GM12878 (cell line): ENCODE measurements at regions of chr2 and their contacts with region 1.

Region 1: GRCh38 chr2:224520064-224520463 is 65.1 kb downstream of the CUL3 start:
- DNase-seq: peak; percentile 86
- ATAC-seq: peak; percentile 78
- H3K4me3 ChIP-seq: no peak overlapping the region; the same call in 1 of the 2 replicates
- H3K27ac ChIP-seq: peak overlapping the region; percentile 88
- H3K4me1 ChIP-seq: peaks cover 52% of the 10 kb centered on the region
- H3K27me3 ChIP-seq: no peaks in the 10 kb centered on the region
- CTCF ChIP-seq: no peak
- EP300 ChIP-seq: peak; percentile 74 to 84; a peak in 3 of 4 replicates
- POLR2A ChIP-seq: no peak
- RAD21 ChIP-seq: 0 out of 2 replicates have a peak, but pooled peaks have one; percentile 2

Region 2: DNA sequence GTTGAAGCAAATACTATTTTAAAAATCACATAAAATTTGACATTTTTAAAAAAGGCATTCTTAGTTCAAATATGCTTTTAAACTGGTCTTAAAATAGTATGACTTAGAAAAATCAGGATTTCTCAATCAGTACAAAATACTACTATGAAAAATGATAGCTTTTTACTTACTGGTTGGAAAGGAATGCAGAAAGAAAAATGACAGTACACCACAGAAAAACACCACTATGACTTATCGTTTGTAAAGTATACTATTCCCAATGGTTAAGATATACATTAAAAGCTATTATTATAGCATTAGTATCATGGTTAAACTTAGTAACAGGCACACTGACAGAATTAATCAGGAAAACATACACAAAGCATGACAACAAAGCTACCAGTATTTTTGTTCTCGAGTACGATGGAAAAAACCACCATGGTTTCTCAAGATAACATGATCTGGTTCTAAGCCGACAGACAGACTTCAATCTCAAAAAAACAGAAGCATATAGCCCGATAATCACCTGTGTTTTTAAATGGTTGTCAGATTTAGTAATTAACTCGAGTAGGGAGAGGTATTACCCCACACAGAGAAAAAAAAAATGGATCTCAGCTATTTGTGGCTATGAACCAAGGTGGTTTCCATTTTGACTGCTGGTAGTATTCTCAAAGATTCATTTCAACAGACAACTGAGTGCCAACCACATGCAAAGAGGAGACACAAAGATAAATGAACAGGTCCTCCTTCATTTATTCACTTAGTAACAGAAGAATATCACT is 26.0 kb after region 1 on chr2:
- CTCF ChIA-PET with region 1: interaction called, 3 read pairs
- POLR2A ChIA-PET with region 1: interaction called, 9 read pairs
- RAD21 ChIA-PET with region 1: interaction called, 16 read pairs
- SMC1A ChIA-PET with region 1: interaction called, 9 read pairs
- in situ Hi-C with region 1: no loop called
- intact Hi-C with region 1: no loop called
- DNase-seq: no peak
- ATAC-seq: peak; percentile 83
- H3K4me3 ChIP-seq: no peak overlapping the region
- H3K27ac ChIP-seq: no peak overlapping the region; the same call in 1 of the 2 replicates
- H3K4me1 ChIP-seq: peaks cover 3% of the 10 kb centered on the region; the same call in 1 of the 2 replicates
- H3K27me3 ChIP-seq: no peaks in the 10 kb centered on the region
- CTCF ChIP-seq: no peak
- EP300 ChIP-seq: peak in 1 of 2 experiments; percentile 26; a peak in 1 of 4 replicates
- POLR2A ChIP-seq: no peak
- RAD21 ChIP-seq: no peak

Region 3: GRCh38 chr2:224570328-224570993 is 50.4 kb after region 1 on chr2:
- CTCF ChIA-PET with region 1: interaction called, 9 read pairs
- POLR2A ChIA-PET with region 1: interaction called, 49 read pairs
- RAD21 ChIA-PET with region 1: interaction called, 94 read pairs
- SMC1A ChIA-PET with region 1: interaction called, 219 read pairs
- in situ Hi-C with region 1: loop called (anchors 5 kb)
- intact Hi-C with region 1: no loop called
- DNase-seq: no peak
- ATAC-seq: peak; percentile 41
- H3K4me3 ChIP-seq: no peak overlapping the region
- H3K27ac ChIP-seq: no peak overlapping the region
- H3K4me1 ChIP-seq: peaks cover 7% of the 10 kb centered on the region; the same call in 1 of the 2 replicates
- H3K27me3 ChIP-seq: no peaks in the 10 kb centered on the region
- CTCF ChIP-seq: no peak
- EP300 ChIP-seq: no peak
- POLR2A ChIP-seq: no peak
- RAD21 ChIP-seq: no peak

Region 4: GRCh38 chr2:224585205-224586088 is 65.4 kb after region 1 on chr2 and contains the start of gene CUL3:
- CTCF ChIA-PET with region 1: interaction called, 4 read pairs
- POLR2A ChIA-PET with region 1: interaction called, 49 read pairs
- RAD21 ChIA-PET with region 1: interaction called, 91 read pairs
- SMC1A ChIA-PET with region 1: interaction called, 219 read pairs
- in situ Hi-C with region 1: no loop called
- intact Hi-C with region 1: loop called (anchors 2 kb)
- DNase-seq: peak; percentile 90
- ATAC-seq: peak; percentile 88
- H3K4me3 ChIP-seq: peak within 1 kb of the TSS; percentile 96
- H3K27ac ChIP-seq: peak within 1 kb of the TSS; percentile 88
- H3K4me1 ChIP-seq: no peaks in the 10 kb centered on the region
- H3K27me3 ChIP-seq: no peaks in the 10 kb centered on the region
- CTCF ChIP-seq: no peak
- EP300 ChIP-seq: 0 out of 4 replicates have a peak, but pooled peaks of 1 of the 2 experiments have one; percentile 10
- POLR2A ChIP-seq: peak; percentile 90
- RAD21 ChIP-seq: no peak
- polyA plus RNA-seq, gene CUL3: 49.0 to 71.9 TPM

Region 5: GRCh38 chr2:224666951-224667553 is 147.0 kb after region 1 on chr2:
- CTCF ChIA-PET with region 1: no interaction called
- POLR2A ChIA-PET with region 1: no interaction called
- RAD21 ChIA-PET with region 1: no interaction called
- SMC1A ChIA-PET with region 1: interaction called, 3 read pairs
- in situ Hi-C with region 1: no loop called
- intact Hi-C with region 1: loop called (anchors 1 kb)
- DNase-seq: peak; percentile 92
- ATAC-seq: peak; percentile 97
- H3K4me3 ChIP-seq: 0 out of 2 replicates have a peak overlapping the region, but pooled peaks have one; percentile 10
- H3K27ac ChIP-seq: peak overlapping the region; percentile 48
- H3K4me1 ChIP-seq: peaks cover 3% of the 10 kb centered on the region
- H3K27me3 ChIP-seq: no peaks in the 10 kb centered on the region
- CTCF ChIP-seq: no peak
- EP300 ChIP-seq: peak; percentile 96 to 97
- POLR2A ChIP-seq: no peak
- RAD21 ChIP-seq: no peak

Region 6: GRCh38 chr2:224711859-224712665 is 192.0 kb after region 1 on chr2:
- CTCF ChIA-PET with region 1: no interaction called
- POLR2A ChIA-PET with region 1: no interaction called
- RAD21 ChIA-PET with region 1: no interaction called
- SMC1A ChIA-PET with region 1: no interaction called
- in situ Hi-C with region 1: no loop called
- intact Hi-C with region 1: no loop called
- DNase-seq: no peak
- ATAC-seq: no peak
- H3K4me3 ChIP-seq: no peak overlapping the region
- H3K27ac ChIP-seq: no peak overlapping the region
- H3K4me1 ChIP-seq: no peaks in the 10 kb centered on the region
- H3K27me3 ChIP-seq: no peaks in the 10 kb centered on the region
- CTCF ChIP-seq: no peak
- EP300 ChIP-seq: no peak
- POLR2A ChIP-seq: no peak
- RAD21 ChIP-seq: no peak